ENCODE measurements at regions of chr1 and their contacts with region 1.

Region 1: DNA sequence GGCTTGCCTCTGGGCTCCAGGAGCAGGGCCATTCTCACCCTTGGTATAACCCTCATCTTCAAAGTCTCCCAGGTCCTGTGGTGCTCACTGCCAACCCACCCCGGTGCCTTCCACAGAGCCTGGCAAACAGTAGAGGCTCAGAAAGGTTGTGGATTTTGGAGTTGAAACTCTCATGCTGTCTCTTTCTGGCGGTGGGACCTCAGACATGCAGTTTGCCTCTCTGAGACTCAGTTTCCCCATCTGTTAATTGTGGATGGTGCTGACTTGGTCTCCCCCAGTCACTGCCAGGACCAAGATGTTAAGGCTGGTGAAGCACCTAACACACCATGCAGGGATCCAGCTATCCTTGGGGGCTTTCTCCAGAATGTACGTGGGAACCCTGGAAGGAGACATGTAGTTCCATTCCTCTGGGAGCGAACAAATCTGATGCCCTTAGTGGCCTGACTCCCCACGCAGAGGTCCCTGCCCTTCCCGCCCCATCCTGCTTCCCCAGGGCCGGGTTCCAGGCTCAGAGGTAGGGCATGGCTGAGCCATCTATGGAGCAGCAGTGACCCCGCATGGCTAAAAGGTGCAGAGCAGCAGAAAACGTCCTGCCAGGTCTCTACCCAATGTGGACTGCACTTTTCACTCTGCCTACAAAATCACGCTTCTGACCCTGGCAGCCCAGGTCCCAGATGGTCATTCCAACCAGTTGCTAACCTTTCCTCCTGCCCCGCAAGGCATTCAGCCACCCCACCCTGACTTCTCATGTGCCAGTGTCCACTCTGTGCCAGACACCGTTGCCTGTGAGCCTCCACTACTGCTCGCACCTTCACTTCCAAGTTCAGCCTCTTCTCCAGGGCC is 9.2 kb upstream of the TTC22 start:
- DNase-seq: peak; percentile 51
- ATAC-seq: peak; percentile 90
- H3K4me3 Mint-ChIP-seq: no peak overlapping the region
- H3K27ac Mint-ChIP-seq: no peak overlapping the region
- H3K4me1 Mint-ChIP-seq: no peaks in the 10 kb centered on the region
- H3K27me3 Mint-ChIP-seq: peaks cover 2% of the 10 kb centered on the region
- CTCF ChIP-seq: no peak

Region 2: GRCh38 chr1:54671985-54672608 is 138.2 kb before region 1 on chr1:
- CTCF ChIA-PET with region 1: interaction called, 6 read pairs
- POLR2A ChIA-PET with region 1: no interaction called
- intact Hi-C with region 1: loop called (anchors 1 kb)
- DNase-seq: peak; percentile 20
- ATAC-seq: peak; percentile 57
- H3K4me3 Mint-ChIP-seq: no peak overlapping the region
- H3K27ac Mint-ChIP-seq: no peak overlapping the region
- H3K4me1 Mint-ChIP-seq: no peaks in the 10 kb centered on the region
- H3K27me3 Mint-ChIP-seq: no peaks in the 10 kb centered on the region
- CTCF ChIP-seq: no peak

Region 3: GRCh38 chr1:54763816-54764132 is 46.5 kb before region 1 on chr1:
- CTCF ChIA-PET with region 1: no interaction called
- POLR2A ChIA-PET with region 1: no interaction called
- intact Hi-C with region 1: no loop called
- DNase-seq: no peak
- ATAC-seq: no peak
- H3K4me3 Mint-ChIP-seq: peak overlapping the region; percentile 90
- H3K27ac Mint-ChIP-seq: peak overlapping the region; percentile 89
- H3K4me1 Mint-ChIP-seq: peaks cover 24% of the 10 kb centered on the region
- H3K27me3 Mint-ChIP-seq: no peaks in the 10 kb centered on the region
- CTCF ChIP-seq: no peak